Activated T-helper 1 cell treated with anti-CD3 and anti-CD28 coated beads, Interleukin-12 subunit alpha, Interleukin-12 subunit beta, Interleukin-2, Interleukin-4 antibody, amounts not matched to agents 30 ng/mL and 10 ng/mL and 1 ng/mL, durations not matched to agents 14 hours and 24 hours and 36 hours (primary cell): ENCODE measurements at regions of chr5 and their contacts with region 1.

Region 1: DNA sequence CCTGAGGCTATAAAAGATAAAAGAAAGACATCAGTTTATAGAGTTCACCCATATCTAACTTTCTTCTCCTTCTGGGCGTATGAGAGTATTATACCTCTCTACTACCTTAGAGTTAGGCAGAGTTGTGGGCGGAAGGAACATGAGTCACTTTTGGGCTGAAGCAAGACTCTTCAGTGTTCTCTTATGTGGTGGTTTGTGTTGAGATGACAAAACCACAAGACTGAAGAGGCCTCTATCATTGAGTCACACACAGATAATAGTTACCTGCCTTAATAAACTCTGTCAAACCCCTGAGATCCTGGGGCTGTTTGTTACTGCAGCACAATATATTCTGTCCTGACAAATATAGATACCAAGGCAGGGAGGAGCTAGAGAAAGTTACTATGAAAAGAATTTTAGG is 184.2 kb downstream of the EFNA5 start:
- DNase-seq: peak; percentile 29
- H3K4me3 Mint-ChIP-seq: no peak overlapping the region
- H3K27ac Mint-ChIP-seq: no peak overlapping the region
- H3K4me1 Mint-ChIP-seq: peaks cover 21% of the 10 kb centered on the region
- H3K27me3 Mint-ChIP-seq: peaks cover 11% of the 10 kb centered on the region

Region 2: DNA sequence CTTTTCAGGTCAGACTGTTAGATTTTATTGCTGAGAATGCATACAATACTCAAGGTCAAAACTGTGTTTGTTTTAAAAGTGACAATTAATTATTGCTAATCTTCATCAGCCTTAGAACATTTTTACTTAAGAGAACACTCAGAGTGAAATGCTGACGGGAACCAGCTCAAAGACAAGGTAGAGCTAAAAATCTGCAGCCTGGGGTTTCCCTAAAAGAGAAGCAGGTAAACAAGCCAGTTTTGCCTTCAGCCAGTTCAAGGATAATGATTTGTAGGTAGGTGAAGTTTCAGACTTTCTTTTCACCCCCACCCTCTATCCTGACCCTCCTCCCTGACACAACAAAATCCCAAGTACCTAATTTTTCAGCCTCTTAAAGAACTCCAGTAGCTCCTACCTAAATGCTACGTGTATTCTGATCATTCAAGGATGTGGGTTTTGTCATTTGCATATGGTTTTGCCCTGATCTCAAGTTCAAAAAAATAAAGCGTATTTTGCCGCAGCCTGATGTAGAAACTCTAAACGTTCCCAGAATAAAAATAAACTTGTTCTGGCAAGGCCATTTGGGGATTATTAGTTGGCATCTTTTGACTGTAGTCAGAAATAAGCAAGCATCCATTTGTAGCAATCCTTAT is 223.0 kb before region 1 on chr5:
- intact Hi-C with region 1: loop called (anchors 5 kb)
- DNase-seq: no peak
- H3K4me3 Mint-ChIP-seq: no peak overlapping the region
- H3K27ac Mint-ChIP-seq: no peak overlapping the region
- H3K4me1 Mint-ChIP-seq: no peaks in the 10 kb centered on the region
- H3K27me3 Mint-ChIP-seq: no peaks in the 10 kb centered on the region

Region 3: GRCh38 chr5:107389130-107389774 is 97.2 kb before region 1 on chr5:
- intact Hi-C with region 1: loop called (anchors 1 kb)
- DNase-seq: peak; percentile 13
- H3K4me3 Mint-ChIP-seq: peak overlapping the region; percentile 50
- H3K27ac Mint-ChIP-seq: peak overlapping the region; percentile 74
- H3K4me1 Mint-ChIP-seq: peaks cover 29% of the 10 kb centered on the region
- H3K27me3 Mint-ChIP-seq: no peaks in the 10 kb centered on the region